ENCODE measurements at regions of chr1 and their contacts with region 1.

Region 1: DNA sequence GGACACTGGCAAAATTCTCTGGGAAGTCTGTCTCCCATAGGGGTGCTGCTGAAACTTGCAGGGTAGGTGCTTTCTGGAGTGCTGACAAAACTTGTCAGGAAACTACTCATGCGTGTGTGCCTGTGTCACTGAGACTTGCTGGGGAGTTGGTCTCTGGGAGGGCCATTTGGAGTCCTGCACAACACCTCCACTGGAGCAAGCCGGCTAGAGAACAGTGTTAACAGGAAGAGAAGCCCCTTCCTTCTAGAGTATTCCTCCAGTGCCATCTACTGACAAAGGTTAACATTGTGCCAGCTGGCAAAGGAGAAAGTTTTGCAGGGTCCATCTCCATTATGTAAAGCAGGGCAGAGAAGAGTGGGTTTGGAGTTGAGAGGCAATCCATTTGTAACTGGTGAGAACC is 30.0 kb downstream of the ZMYM4 start:
- DNase-seq: peak; percentile 25
- ATAC-seq: peak; percentile 81
- H3K4me3 Mint-ChIP-seq: no peak overlapping the region
- H3K27ac Mint-ChIP-seq: no peak overlapping the region
- H3K4me1 Mint-ChIP-seq: peaks cover 9% of the 10 kb centered on the region
- H3K27me3 Mint-ChIP-seq: no peaks in the 10 kb centered on the region

Region 2: GRCh38 chr1:34786521-34787325 is 511.7 kb before region 1 on chr1:
- CTCF ChIA-PET with region 1: no interaction called
- POLR2A ChIA-PET with region 1: no interaction called
- intact Hi-C with region 1: loop called in 1 of 2 experiments (anchors 1 kb)
- DNase-seq: peak; percentile 85
- ATAC-seq: peak; percentile 87
- H3K4me3 Mint-ChIP-seq: no peak overlapping the region
- H3K27ac Mint-ChIP-seq: no peak overlapping the region
- H3K4me1 Mint-ChIP-seq: peaks cover 11% of the 10 kb centered on the region
- H3K27me3 Mint-ChIP-seq: peaks cover 30% of the 10 kb centered on the region

Region 3: GRCh38 chr1:35120458-35121133 is 177.9 kb before region 1 on chr1:
- CTCF ChIA-PET with region 1: no interaction called
- POLR2A ChIA-PET with region 1: no interaction called
- intact Hi-C with region 1: no loop called
- DNase-seq: peak; percentile 26
- ATAC-seq: peak; percentile 42
- H3K4me3 Mint-ChIP-seq: peak overlapping the region; percentile 15
- H3K27ac Mint-ChIP-seq: no peak overlapping the region
- H3K4me1 Mint-ChIP-seq: peaks cover 7% of the 10 kb centered on the region
- H3K27me3 Mint-ChIP-seq: peaks cover 9% of the 10 kb centered on the region

Region 4: DNA sequence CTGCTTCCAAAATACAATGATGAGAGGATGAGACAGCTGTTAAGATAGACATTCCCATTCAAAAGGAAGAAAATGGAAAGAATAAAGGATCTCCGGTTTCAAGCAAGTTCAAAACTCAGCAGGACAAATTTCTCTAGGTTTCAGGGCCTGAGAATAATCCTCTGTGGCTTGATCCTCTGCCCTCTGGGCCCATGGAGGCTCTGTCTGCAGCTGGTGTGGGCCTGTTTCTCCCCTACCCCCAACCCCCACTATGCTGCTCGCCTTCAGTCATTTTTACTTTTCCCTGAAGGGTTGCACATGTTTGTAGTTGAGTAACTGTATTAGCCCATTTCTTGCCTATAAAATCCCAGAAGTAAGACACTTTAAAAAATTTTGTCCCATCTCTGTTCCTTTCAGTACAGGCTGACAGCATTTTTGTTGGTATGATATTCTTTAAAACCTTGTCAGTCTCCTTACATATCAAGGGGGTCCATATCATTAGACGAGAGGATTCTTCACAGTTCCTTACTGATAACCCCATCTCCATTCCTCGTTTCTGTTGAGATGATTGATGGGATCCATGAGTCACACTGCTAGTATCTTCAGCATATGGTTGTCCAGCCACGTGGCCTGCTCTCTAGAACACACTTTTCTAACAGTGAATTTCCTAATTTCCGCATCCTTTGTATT is 19.4 kb before region 1 on chr1:
- CTCF ChIA-PET with region 1: no interaction called
- POLR2A ChIA-PET with region 1: no interaction called
- intact Hi-C with region 1: no loop called
- DNase-seq: no peak
- ATAC-seq: no peak
- H3K4me3 Mint-ChIP-seq: no peak overlapping the region
- H3K27ac Mint-ChIP-seq: no peak overlapping the region
- H3K4me1 Mint-ChIP-seq: peaks cover 4% of the 10 kb centered on the region
- H3K27me3 Mint-ChIP-seq: no peaks in the 10 kb centered on the region

Region 5: GRCh38 chr1:35431173-35431599 is 132.7 kb after region 1 on chr1:
- CTCF ChIA-PET with region 1: no interaction called
- POLR2A ChIA-PET with region 1: no interaction called
- intact Hi-C with region 1: no loop called
- DNase-seq: no peak
- ATAC-seq: peak; percentile 87
- H3K4me3 Mint-ChIP-seq: no peak overlapping the region
- H3K27ac Mint-ChIP-seq: peak overlapping the region; percentile 75
- H3K4me1 Mint-ChIP-seq: peaks cover 21% of the 10 kb centered on the region
- H3K27me3 Mint-ChIP-seq: no peaks in the 10 kb centered on the region

Region 6: DNA sequence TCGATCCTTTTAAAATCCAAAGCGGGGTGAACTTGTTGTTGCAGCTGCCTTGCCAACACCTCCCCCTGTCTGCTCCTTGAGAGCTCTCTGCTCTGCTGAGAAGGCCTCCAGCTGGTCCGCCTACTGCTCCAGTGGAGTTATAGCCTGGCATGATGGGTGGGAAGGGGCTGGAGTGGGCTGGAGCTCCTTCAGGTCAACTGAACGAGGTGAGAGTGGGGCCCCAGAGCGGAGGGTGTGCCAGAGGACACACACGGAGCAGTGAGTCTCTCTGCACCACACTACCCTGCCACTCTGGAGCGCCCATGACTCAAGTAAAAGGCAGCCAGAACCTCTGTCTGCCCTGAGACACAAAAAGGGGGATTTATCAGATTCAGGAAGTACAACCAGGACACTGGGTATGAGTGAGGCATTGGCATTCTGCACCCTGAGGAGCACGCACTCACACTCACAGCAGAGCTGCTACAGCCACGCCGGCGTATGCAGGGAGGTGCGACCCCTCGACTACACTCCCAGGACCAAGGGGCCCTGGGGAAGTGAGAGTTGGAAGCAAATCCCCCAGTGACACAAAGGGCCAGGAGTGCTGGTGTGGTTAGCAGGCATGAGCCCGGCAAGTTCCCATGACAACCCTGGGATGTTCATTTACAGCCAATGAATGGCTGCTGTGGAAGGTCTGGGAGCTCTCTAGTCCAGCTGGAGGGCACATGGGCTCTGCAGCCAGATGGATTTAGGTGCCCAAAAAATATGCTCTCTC is 1052.9 kb after region 1 on chr1:
- CTCF ChIA-PET with region 1: no interaction called
- POLR2A ChIA-PET with region 1: no interaction called
- intact Hi-C with region 1: no loop called
- DNase-seq: peak; percentile 33
- ATAC-seq: peak; percentile 14
- H3K4me3 Mint-ChIP-seq: no peak overlapping the region
- H3K27ac Mint-ChIP-seq: peak overlapping the region; percentile 80
- H3K4me1 Mint-ChIP-seq: peaks cover 38% of the 10 kb centered on the region
- H3K27me3 Mint-ChIP-seq: no peaks in the 10 kb centered on the region

Measured in activated CD4-positive, alpha-beta T cell treated with anti-CD3 and anti-CD28 coated beads for 36 hours (primary cell).